ENCODE measurements at regions of chr3 and their contacts with region 1.

Region 1: DNA sequence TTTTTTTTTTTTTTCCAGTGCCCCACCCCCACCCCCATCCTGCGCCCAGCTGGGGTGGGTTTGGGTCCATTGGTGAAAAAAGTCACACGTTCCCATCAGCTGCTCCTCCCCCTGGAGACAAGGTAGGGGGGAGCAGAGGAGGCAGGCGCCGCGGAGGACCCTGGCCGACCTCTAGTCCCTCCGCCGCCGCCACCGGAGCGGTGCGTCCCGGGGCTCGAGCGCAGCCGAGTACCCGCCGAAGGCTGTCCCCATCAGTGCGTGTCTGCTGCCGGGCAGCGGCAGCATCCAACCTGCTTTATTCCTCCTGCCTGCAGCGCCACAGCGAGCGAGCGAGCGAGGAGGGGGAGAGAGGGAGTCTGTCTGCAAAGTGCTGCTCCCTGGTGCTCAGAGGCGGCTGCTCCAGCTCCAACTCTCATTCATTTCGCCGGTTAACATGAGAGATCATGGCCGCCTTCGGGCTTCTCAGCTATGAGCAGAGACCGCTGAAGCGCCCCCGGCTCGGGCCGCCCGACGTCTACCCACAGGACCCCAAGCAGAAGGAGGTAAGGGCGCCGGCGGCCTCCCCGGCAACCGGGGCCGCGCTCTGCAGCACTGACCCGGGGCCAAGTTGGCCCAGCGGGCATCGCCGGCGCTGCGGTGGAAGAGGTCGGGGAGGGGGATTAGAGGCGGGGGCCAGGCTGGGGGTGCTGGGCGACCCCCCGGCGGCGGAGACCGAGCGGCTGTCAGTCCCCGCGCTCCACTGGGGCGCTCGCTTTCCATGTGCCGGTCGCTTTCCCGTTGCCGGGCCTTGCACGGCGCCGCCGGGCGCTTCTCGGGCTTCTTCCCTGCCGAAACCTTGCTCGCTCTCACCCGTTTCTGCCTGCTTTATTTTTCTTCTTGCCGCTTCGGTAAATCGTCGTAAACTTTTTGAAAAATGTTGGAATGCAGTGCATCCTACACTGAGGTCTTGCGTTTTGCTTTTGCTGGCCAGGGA is 1.3 kb downstream of the MED12L start:
- DNase-seq: peak; percentile 67
- H3K4me3 Mint-ChIP-seq: peak overlapping the region; percentile 86
- H3K27ac Mint-ChIP-seq: peak overlapping the region; percentile 46
- H3K4me1 Mint-ChIP-seq: peaks cover 11% of the 10 kb centered on the region
- H3K27me3 Mint-ChIP-seq: peaks cover 52% of the 10 kb centered on the region

Region 2: DNA sequence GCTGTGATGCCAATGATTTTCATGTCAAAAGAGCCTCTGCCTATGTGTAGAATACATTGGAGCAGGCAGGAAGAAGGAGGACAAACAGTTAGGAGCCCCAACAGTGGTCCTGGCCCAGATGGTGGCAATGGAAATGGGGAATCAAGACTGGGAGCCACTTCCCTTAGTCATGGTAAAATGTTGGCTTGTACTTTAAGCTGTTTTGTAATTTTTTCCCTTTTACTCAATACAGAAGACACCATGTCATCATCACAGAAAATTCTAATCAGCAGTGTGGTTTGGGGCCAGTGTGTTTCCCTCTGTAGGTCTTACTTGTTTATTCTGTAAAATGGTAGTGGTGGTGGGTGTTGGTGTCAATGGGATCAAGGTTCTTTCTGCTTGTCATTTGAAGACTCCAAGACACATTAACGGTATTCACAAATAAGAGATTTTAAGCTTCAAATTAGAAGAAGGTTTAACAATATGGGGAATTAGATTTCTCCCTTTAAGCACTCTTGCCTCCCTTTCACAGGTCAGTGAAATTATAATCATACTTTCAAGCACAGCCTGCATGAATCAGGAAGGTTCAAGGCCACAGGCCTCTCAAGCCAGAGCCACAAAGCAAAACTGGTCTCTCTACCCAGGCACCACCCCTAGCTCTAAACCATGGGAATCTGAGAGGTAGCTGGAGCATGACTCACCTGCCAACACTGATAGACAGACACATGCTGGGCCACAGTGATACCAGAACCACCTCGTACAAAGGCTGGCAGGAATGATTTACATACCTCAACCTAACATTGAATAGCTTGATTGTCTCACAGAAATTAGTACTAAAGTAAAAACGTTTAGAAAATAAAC is 348.7 kb before region 1 on chr3:
- intact Hi-C with region 1: loop called (anchors 10 kb)
- DNase-seq: no peak
- H3K4me3 Mint-ChIP-seq: peak overlapping the region; percentile 53
- H3K27ac Mint-ChIP-seq: peak overlapping the region; percentile 100
- H3K4me1 Mint-ChIP-seq: peaks cover 91% of the 10 kb centered on the region
- H3K27me3 Mint-ChIP-seq: no peaks in the 10 kb centered on the region

Region 3: GRCh38 chr3:150875548-150875947 is 211.2 kb before region 1 on chr3:
- intact Hi-C with region 1: loop called (anchors 5 kb)
- DNase-seq: no peak
- H3K4me3 Mint-ChIP-seq: no peak overlapping the region
- H3K27ac Mint-ChIP-seq: peak overlapping the region; percentile 51
- H3K4me1 Mint-ChIP-seq: peaks cover 24% of the 10 kb centered on the region
- H3K27me3 Mint-ChIP-seq: no peaks in the 10 kb centered on the region

Region 4: GRCh38 chr3:151135541-151136337 is 49.0 kb after region 1 on chr3:
- intact Hi-C with region 1: loop called (anchors 1 kb)
- DNase-seq: peak; percentile 48
- H3K4me3 Mint-ChIP-seq: no peak overlapping the region
- H3K27ac Mint-ChIP-seq: peak overlapping the region; percentile 95
- H3K4me1 Mint-ChIP-seq: peaks cover 30% of the 10 kb centered on the region
- H3K27me3 Mint-ChIP-seq: peaks cover 4% of the 10 kb centered on the region

Region 5: DNA sequence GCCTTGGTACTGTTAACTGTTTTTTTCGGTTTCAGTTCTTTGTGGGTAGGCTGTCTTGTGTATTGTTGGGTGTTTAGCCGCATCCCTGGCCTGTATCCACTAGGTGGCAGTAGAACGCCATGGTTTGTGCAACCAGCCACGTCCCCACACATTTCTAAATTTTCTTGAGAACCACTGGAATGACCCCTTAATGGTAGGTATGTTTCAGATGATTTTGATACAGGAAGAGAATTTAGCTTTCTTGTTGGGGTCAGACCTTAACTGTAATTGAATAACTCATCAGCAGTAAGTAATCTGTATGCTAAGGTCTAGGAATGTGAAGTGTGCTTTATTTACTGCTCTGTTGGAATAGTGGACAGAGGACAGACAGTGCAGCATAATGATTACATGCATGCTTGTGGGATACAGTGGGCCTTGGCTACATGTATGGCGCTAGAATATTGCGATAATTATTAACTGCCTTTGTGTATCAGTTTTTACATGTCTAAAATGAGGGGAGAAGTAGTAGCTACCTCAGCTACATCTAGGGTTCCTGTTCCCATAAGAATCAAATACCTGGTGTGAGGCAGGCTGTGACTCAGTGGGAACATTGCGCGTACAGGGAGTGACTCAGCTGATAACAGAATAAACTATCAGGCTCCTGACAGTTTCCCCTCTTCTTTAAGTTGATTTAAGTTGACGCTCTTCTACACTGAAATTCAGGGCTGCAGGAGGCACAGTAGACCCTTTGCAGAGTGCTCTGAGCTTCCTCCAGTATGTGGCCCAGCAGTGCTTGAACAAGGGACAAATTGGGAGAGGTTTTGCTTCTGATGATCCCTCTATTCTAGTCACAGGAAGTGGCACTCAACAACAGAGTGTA is 141.3 kb after region 1 on chr3:
- intact Hi-C with region 1: loop called (anchors 5 kb)
- DNase-seq: peak; percentile 71
- H3K4me3 Mint-ChIP-seq: no peak overlapping the region
- H3K27ac Mint-ChIP-seq: peak overlapping the region; percentile 83
- H3K4me1 Mint-ChIP-seq: peaks cover 59% of the 10 kb centered on the region
- H3K27me3 Mint-ChIP-seq: no peaks in the 10 kb centered on the region

Measured in activated T-helper 2 cell treated with anti-CD3 and anti-CD28 coated beads, Interferon-gamma antibody, Interleukin-2, Interleukin-4, amounts not matched to agents 10 μg/mL and 5 μg/mL and 100 μg/mL, durations not matched to agents 14 hours and 24 hours and 36 hours (primary cell).